ENCODE measurements at regions of chr19 and their contacts with region 1.

Region 1: DNA sequence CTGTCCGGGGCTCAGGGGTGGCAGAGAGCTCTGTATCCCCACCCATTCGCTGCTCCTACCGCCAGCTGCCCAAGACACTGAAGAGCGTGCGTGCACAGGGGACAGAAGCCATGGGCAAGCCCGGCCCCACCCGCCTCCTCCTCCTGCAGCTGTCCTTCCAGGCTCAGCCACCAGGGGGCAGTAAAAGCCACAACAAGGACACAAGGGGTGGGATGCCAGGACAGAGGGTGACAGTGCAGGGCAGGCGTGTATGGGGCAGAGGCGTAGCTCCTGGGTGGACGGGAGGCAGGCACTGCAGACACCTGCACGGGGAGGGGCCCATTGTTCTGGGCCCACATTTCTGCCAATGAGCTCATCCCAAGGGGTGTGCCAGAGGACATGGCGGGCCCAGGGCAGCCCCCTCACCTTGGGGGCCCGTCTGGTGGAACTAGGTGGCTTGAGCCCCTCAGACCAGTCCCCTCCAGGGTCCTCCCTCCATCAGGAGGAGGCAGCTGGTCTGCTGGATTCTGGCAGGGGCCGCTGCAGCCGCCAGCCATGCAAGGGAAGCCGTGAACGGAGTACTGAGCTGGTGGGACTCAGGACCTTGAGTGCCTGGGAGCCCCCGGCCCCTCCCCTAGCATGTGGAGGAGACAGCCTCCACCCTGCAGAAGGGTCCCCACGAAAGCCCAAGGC is 61.1 kb downstream of the MLLT1 start:
- DNase-seq: peak; percentile 86
- H3K4me3 Mint-ChIP-seq: no peak overlapping the region
- H3K27ac Mint-ChIP-seq: peak overlapping the region; percentile 66
- H3K4me1 Mint-ChIP-seq: peaks cover 2% of the 10 kb centered on the region
- H3K27me3 Mint-ChIP-seq: no peaks in the 10 kb centered on the region

Region 2: GRCh38 chr19:6048808-6049405 is 169.7 kb before region 1 on chr19:
- CTCF ChIA-PET with region 1: no interaction called
- POLR2A ChIA-PET with region 1: no interaction called
- DNase-seq: peak; percentile 85
- H3K4me3 Mint-ChIP-seq: no peak overlapping the region
- H3K27ac Mint-ChIP-seq: no peak overlapping the region
- H3K4me1 Mint-ChIP-seq: peaks cover 4% of the 10 kb centered on the region
- H3K27me3 Mint-ChIP-seq: peaks cover 6% of the 10 kb centered on the region

Region 3: DNA sequence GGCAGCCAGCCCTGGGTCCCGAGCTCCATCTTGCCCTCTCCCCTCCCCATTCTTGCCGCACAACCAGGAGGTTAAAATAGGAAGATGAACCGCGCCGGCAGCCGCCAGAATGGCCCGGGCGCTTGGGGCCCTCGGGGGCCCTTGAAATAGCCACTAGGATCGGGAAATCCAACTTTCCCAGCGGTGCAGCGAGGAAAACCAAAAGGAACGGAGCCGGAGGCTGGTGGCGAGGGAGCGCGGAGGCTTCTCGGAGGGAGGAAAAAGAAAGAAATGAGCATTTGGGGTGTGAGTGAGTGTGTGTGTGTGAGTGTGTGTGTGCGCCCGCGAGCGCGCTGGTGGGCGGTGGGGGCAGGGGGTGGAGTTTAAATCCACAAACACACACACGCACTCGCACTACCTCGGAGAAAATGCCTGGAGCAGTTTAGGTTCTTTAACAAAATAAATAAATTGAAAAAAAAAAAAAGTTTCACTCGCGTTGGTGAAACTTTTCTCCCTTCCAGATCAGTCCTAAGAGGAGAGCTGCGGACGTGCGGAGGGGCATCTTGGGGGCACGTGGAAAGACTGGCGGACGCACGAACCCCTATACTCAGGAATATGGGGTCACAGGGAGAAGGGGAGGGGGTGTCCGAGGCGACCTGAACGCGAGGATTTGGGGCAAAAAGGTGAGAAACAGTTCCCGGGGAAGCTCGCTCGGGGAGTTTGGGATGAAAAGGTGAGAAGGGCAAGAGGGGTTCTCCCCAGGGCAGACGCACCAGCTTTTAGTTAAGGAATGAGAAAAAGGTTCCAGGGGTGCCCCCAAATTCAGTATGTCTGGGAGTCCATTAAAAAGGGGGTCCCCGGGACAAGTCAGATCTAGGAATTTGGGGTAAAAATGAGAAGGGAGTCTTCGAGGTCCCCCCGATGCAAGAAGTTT is 109.7 kb before region 1 on chr19:
- CTCF ChIA-PET with region 1: no interaction called
- POLR2A ChIA-PET with region 1: no interaction called
- DNase-seq: peak; percentile 50
- H3K4me3 Mint-ChIP-seq: peak overlapping the region; percentile 77
- H3K27ac Mint-ChIP-seq: peak overlapping the region; percentile 46
- H3K4me1 Mint-ChIP-seq: peaks cover 24% of the 10 kb centered on the region
- H3K27me3 Mint-ChIP-seq: peaks cover 19% of the 10 kb centered on the region

Region 4: DNA sequence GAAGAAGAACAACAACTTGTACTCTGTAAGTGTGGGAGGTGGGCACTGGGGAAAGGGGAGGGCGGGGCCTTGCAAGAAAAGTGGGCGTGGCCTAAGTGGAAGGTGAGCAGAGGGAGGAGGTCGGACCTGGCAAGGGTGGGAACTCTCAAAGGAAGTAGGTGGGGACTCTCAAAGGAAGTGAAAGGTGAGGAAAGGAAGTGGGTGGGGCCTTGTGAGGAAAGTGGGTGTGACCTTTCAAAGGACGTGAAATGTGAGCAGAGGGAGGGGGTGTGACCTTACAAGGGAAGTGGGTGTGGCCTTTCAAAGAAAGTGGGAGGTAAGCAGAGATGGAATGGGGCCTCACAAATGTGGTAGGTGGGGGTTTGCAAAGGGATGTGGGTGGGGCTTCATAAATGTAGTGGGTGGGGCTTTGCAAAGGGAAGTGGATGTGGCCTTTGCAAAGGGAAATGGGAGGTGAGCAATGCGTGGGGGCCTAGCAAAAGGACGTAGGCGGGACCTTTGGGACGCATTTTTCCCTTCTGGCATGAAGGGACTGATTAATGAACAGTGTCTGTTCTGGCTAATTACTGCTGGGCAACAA is 57.3 kb before region 1 on chr19:
- CTCF ChIA-PET with region 1: no interaction called
- POLR2A ChIA-PET with region 1: no interaction called
- DNase-seq: peak; percentile 80
- H3K4me3 Mint-ChIP-seq: peak overlapping the region; percentile 9
- H3K27ac Mint-ChIP-seq: peak overlapping the region; percentile 78
- H3K4me1 Mint-ChIP-seq: peaks cover 14% of the 10 kb centered on the region
- H3K27me3 Mint-ChIP-seq: no peaks in the 10 kb centered on the region

Region 5: GRCh38 chr19:6204212-6204611 is 14.4 kb before region 1 on chr19:
- CTCF ChIA-PET with region 1: interaction called, 13 read pairs
- POLR2A ChIA-PET with region 1: no interaction called
- DNase-seq: no peak
- H3K4me3 Mint-ChIP-seq: no peak overlapping the region
- H3K27ac Mint-ChIP-seq: no peak overlapping the region
- H3K4me1 Mint-ChIP-seq: peaks cover 4% of the 10 kb centered on the region
- H3K27me3 Mint-ChIP-seq: no peaks in the 10 kb centered on the region

Region 6: DNA sequence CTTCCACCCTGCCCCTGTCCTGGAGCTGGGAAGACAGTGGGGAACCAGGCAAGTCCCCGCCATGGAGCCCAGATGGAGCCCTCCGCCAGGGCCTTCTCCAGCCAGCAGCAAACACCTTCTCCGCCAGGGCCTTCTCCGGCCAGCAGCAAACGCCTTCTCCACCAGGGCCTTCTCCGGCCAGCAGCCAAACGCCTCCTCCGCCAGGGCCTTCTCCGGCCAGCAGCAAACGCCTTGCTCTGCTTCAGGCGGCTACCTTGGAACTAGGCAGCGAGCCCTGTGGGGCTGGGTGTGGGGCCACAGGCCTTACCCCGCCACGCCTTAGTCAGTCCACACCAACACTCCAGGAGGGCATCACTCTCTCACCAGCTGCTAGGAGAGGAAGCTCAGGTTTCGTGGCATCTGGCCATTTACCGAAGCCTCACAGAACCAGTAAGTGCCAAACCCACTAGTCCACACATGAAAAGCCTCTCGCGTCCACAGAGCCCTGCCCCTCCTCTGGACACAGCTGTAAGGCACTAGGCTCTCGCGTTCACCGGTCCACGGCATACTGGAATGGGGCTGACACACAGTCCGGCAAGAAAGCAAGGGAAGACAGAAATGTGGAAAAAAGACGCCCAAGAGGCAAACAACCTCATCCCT is 20.1 kb after region 1 on chr19:
- CTCF ChIA-PET with region 1: interaction called, 13 read pairs
- POLR2A ChIA-PET with region 1: no interaction called
- DNase-seq: no peak
- H3K4me3 Mint-ChIP-seq: no peak overlapping the region
- H3K27ac Mint-ChIP-seq: no peak overlapping the region
- H3K4me1 Mint-ChIP-seq: peaks cover 23% of the 10 kb centered on the region
- H3K27me3 Mint-ChIP-seq: no peaks in the 10 kb centered on the region

Measured in activated CD4-positive, alpha-beta T cell treated with anti-CD3 and anti-CD28 coated beads, Interleukin-2, amount 10 ng/mL, durations not matched to agents 7 days and 5 days (primary cell).